CD8-positive, alpha-beta T cell (primary cell): ENCODE measurements at regions of chr4 and their contacts with region 1.

Region 1: DNA sequence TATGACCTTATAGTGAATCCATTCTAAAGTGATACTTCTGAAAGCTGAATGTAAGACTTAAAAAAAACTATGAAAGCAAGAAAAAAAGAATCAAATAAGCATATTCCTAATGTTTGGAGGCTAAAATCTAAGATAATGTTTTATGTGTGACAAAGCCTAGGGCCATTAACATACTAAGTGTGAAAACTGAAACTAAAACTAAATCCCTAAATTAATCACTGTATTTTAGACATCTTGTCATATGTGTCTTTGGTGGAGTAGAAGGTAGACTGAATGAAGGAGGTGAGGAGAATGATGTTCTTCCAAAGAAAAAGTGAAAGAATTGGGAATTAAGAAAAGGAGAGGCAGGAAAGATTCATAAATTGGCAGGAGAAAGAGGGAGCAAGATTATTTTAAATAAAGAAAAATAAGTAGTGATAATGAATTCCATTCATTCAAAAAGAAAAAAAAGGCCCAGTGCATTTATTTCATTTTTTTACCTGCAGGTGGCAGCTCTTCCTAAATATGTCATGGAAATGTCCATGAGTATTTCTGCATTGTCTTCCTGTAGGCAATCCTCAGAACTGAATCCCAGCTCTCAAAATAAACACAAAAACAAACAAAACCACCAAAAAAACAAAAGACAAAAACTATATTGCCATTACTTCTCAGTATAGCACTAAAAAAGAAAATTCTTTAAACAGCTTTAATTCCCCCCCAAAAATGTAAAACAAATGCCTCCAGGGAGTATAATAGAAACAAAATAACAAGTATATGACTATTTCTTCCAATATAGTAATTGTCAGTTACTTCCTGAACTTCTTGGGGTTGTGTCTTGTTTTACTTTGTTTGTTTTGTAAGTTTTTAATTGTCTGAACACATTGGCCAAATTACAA is 17.0 kb upstream of the AP1AR start:
- DNase-seq: peak in 2 of 9 experiments; percentile 36 to 54
- ATAC-seq: no peak
- H3K4me3 ChIP-seq: no peak overlapping the region
- H3K4me3 Mint-ChIP-seq: no peak overlapping the region
- H3K27ac ChIP-seq: no peak overlapping the region
- H3K27ac Mint-ChIP-seq: no peak overlapping the region
- H3K4me1 ChIP-seq: no peaks in the 10 kb centered on the region
- H3K4me1 Mint-ChIP-seq: no peaks in the 10 kb centered on the region
- H3K27me3 ChIP-seq: no peaks in the 10 kb centered on the region
- H3K27me3 Mint-ChIP-seq: no peaks in the 10 kb centered on the region
- CTCF ChIP-seq: peak; percentile 51

Region 2: GRCh38 chr4:112245383-112245782 is 30.8 kb after region 1 on chr4:
- CTCF ChIA-PET with region 1: no interaction called
- POLR2A ChIA-PET with region 1: no interaction called
- intact Hi-C with region 1: no loop called
- DNase-seq: no peak
- ATAC-seq: no peak
- H3K4me3 ChIP-seq: no peak overlapping the region
- H3K4me3 Mint-ChIP-seq: no peak overlapping the region
- H3K27ac ChIP-seq: no peak overlapping the region
- H3K27ac Mint-ChIP-seq: no peak overlapping the region
- H3K4me1 ChIP-seq: no peaks in the 10 kb centered on the region
- H3K4me1 Mint-ChIP-seq: peaks cover 18% of the 10 kb centered on the region
- H3K27me3 ChIP-seq: no peaks in the 10 kb centered on the region
- H3K27me3 Mint-ChIP-seq: no peaks in the 10 kb centered on the region
- CTCF ChIP-seq: no peak

Region 3: DNA sequence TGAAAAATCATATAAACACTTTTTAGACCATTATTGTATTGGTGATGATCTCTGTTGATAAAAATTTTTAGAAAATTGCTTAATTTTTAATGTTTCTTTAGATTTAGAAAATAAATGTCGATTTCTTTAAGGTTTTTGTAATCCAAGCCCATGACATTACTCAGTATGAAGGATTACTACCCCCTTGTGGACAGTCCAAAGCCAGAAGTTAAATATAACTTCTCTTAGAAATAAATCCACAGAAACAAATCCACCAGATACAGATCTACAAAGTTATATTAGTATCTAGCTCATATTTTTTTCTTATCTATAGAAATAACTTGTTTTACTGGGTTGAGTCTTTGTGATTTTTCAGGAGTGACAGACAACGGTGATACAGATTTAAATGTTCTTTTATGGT is 52.2 kb after region 1 on chr4:
- CTCF ChIA-PET with region 1: no interaction called
- POLR2A ChIA-PET with region 1: no interaction called
- intact Hi-C with region 1: loop called (anchors 2 to 5 kb)
- DNase-seq: peak in 2 of 9 experiments; percentile 41 to 52
- ATAC-seq: peak; percentile 36
- H3K4me3 ChIP-seq: no peak overlapping the region
- H3K4me3 Mint-ChIP-seq: no peak overlapping the region
- H3K27ac ChIP-seq: no peak overlapping the region
- H3K27ac Mint-ChIP-seq: no peak overlapping the region
- H3K4me1 ChIP-seq: no peaks in the 10 kb centered on the region
- H3K4me1 Mint-ChIP-seq: no peaks in the 10 kb centered on the region
- H3K27me3 ChIP-seq: no peaks in the 10 kb centered on the region
- H3K27me3 Mint-ChIP-seq: no peaks in the 10 kb centered on the region
- CTCF ChIP-seq: peak; percentile 39

Region 4: GRCh38 chr4:112321776-112322684 is 107.4 kb after region 1 on chr4:
- CTCF ChIA-PET with region 1: interaction called, 7 read pairs
- POLR2A ChIA-PET with region 1: no interaction called
- intact Hi-C with region 1: loop called in 1 of 2 experiments (anchors 2 kb)
- DNase-seq: peak; percentile 58 to 85 (median 76)
- ATAC-seq: peak; percentile 99
- H3K4me3 ChIP-seq: no peak overlapping the region
- H3K4me3 Mint-ChIP-seq: no peak overlapping the region
- H3K27ac ChIP-seq: no peak overlapping the region
- H3K27ac Mint-ChIP-seq: no peak overlapping the region
- H3K4me1 ChIP-seq: peaks cover 10% of the 10 kb centered on the region
- H3K4me1 Mint-ChIP-seq: peaks cover 5% of the 10 kb centered on the region
- H3K27me3 ChIP-seq: no peaks in the 10 kb centered on the region
- H3K27me3 Mint-ChIP-seq: no peaks in the 10 kb centered on the region
- CTCF ChIP-seq: peak; percentile 96

Region 5: GRCh38 chr4:112523764-112524505 is 309.3 kb after region 1 on chr4:
- CTCF ChIA-PET with region 1: interaction called, 40 read pairs
- POLR2A ChIA-PET with region 1: no interaction called
- intact Hi-C with region 1: loop called (anchors 1 to 2 kb)
- DNase-seq: peak; percentile 54 to 88 (median 73)
- ATAC-seq: peak; percentile 83
- H3K4me3 ChIP-seq: peak overlapping the region; percentile 31 to 42
- H3K4me3 Mint-ChIP-seq: peak overlapping the region; percentile 82
- H3K27ac ChIP-seq: no peak overlapping the region
- H3K27ac Mint-ChIP-seq: no peak overlapping the region
- H3K4me1 ChIP-seq: peaks cover 18% of the 10 kb centered on the region
- H3K4me1 Mint-ChIP-seq: peaks cover 33% of the 10 kb centered on the region
- H3K27me3 ChIP-seq: peaks cover 33 to 37% of the 10 kb centered on the region in 2 experiments
- H3K27me3 Mint-ChIP-seq: peaks cover 44% of the 10 kb centered on the region
- CTCF ChIP-seq: peak; percentile 76

Region 6: GRCh38 chr4:112604589-112604988 is 390.0 kb after region 1 on chr4:
- CTCF ChIA-PET with region 1: interaction called, 6 read pairs
- POLR2A ChIA-PET with region 1: no interaction called
- intact Hi-C with region 1: loop called (anchors 1 to 5 kb)
- DNase-seq: peak in 6 of 9 experiments; percentile 14 to 55 (median 40)
- ATAC-seq: peak; percentile 59
- H3K4me3 ChIP-seq: no peak overlapping the region
- H3K4me3 Mint-ChIP-seq: no peak overlapping the region
- H3K27ac ChIP-seq: no peak overlapping the region
- H3K27ac Mint-ChIP-seq: no peak overlapping the region
- H3K4me1 ChIP-seq: no peaks in the 10 kb centered on the region
- H3K4me1 Mint-ChIP-seq: no peaks in the 10 kb centered on the region
- H3K27me3 ChIP-seq: no peaks in the 10 kb centered on the region
- H3K27me3 Mint-ChIP-seq: no peaks in the 10 kb centered on the region
- CTCF ChIP-seq: peak; percentile 49

Region 7: GRCh38 chr4:112765317-112765975 is 550.8 kb after region 1 on chr4:
- CTCF ChIA-PET with region 1: interaction called, 4 read pairs
- POLR2A ChIA-PET with region 1: interaction called, 3 read pairs
- intact Hi-C with region 1: loop called in 1 of 2 experiments (anchors 5 kb)
- DNase-seq: peak in 2 of 9 experiments; percentile 18 to 32
- ATAC-seq: no peak
- H3K4me3 ChIP-seq: no peak overlapping the region
- H3K4me3 Mint-ChIP-seq: no peak overlapping the region
- H3K27ac ChIP-seq: no peak overlapping the region
- H3K27ac Mint-ChIP-seq: no peak overlapping the region
- H3K4me1 ChIP-seq: no peaks in the 10 kb centered on the region
- H3K4me1 Mint-ChIP-seq: no peaks in the 10 kb centered on the region
- H3K27me3 ChIP-seq: no peaks in the 10 kb centered on the region
- H3K27me3 Mint-ChIP-seq: peaks cover 9% of the 10 kb centered on the region
- CTCF ChIP-seq: peak; percentile 42